ENCODE measurements at regions of chr6 and their contacts with region 1.

Region 1: GRCh38 chr6:41787219-41787917 is at the start of gene TOMM6:
- DNase-seq: peak; percentile 65
- H3K4me3 ChIP-seq: peak within 1 kb of the TSS; percentile 95
- H3K27me3 ChIP-seq: no peaks in the 10 kb centered on the region
- CTCF ChIP-seq: peak; percentile 88
- polyA plus RNA-seq, gene TOMM6: 157 and 199 TPM in 2 replicates

Region 2: DNA sequence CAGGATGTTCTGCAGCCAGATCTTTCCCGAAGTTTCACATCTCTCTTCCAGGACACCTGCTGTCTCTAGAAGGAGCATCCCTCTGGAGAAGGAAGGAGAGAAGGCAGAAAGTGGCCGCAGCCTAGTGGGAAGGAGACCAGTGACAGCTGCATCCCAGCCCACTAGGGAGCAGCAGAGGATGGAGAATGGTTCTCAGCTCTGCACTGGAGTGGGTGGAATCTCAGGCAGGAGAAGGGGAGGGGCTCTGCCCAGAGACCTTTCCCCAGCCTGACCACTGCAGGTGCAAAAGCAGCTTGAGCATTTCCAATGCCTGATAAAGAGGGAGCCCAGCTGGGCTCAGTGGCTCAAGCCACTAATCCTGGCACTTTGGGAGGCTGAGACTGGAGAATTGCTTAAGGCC is 419.7 kb before region 1 on chr6:
- CTCF ChIA-PET with region 1: interaction called, 17 read pairs
- POLR2A ChIA-PET with region 1: no interaction called
- DNase-seq: no peak
- H3K4me3 ChIP-seq: no peak overlapping the region
- H3K27me3 ChIP-seq: peaks cover 8% of the 10 kb centered on the region
- CTCF ChIP-seq: peak; percentile 82

Region 3: DNA sequence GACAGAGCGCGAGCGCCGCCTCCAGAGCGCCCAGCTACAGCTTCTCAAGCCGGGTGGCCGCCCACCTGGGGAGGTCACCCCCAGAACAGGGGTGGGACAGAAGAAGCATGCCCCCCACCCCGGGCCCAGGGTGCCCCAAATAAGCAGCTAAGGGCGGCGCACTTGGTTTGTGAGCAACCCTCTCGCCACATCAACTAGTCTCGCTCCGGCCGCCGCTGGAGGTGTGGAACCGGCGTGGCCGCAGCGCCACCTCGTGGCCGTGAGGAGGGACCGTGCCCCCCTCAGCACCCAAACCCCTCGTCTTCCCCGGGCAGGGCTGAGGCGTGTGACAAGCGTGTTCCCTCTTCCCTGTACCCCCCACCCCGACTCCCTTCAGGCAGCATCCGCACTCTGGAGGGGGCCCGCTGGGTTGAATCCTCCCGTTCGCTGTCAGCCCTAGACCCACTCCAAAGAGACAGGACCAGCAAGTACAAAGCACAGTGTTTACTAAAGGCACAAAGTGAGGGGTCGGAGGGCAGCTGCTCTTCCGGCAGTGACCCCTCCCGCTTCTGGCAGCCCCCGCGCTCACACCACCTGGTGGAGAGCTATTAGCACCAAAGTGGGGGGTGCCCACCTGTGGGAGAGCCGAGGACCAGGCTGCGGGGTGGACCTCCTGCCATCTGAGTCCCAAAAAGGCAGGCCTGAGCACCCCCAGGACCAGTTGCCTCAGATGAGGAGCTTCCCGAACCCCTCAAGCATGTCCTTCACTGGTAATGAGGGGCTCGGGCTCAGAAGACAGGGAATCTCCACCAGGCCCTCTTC is 103.7 kb before region 1 on chr6:
- CTCF ChIA-PET with region 1: interaction called, 19 read pairs
- POLR2A ChIA-PET with region 1: no interaction called
- DNase-seq: no peak
- H3K4me3 ChIP-seq: peak overlapping the region; percentile 2; the same call in 1 of the 2 replicates
- H3K27me3 ChIP-seq: no peaks in the 10 kb centered on the region
- CTCF ChIP-seq: peak; percentile 96

Region 4: GRCh38 chr6:41771054-41771983 is 16.0 kb before region 1 on chr6:
- CTCF ChIA-PET with region 1: interaction called, 36 read pairs
- POLR2A ChIA-PET with region 1: no interaction called
- DNase-seq: no peak
- H3K4me3 ChIP-seq: no peak overlapping the region
- H3K27me3 ChIP-seq: no peaks in the 10 kb centered on the region
- CTCF ChIP-seq: no peak

Region 5: GRCh38 chr6:41815587-41815986 is 28.2 kb after region 1 on chr6:
- CTCF ChIA-PET with region 1: interaction called, 12 read pairs
- POLR2A ChIA-PET with region 1: no interaction called
- DNase-seq: no peak
- H3K4me3 ChIP-seq: no peak overlapping the region
- H3K27me3 ChIP-seq: no peaks in the 10 kb centered on the region
- CTCF ChIP-seq: no peak

Region 6: GRCh38 chr6:41929924-41930323 is 142.6 kb after region 1 on chr6:
- CTCF ChIA-PET with region 1: interaction called, 21 read pairs
- POLR2A ChIA-PET with region 1: no interaction called
- DNase-seq: no peak
- H3K4me3 ChIP-seq: no peak overlapping the region
- H3K27me3 ChIP-seq: no peaks in the 10 kb centered on the region
- CTCF ChIP-seq: no peak

Region 7: DNA sequence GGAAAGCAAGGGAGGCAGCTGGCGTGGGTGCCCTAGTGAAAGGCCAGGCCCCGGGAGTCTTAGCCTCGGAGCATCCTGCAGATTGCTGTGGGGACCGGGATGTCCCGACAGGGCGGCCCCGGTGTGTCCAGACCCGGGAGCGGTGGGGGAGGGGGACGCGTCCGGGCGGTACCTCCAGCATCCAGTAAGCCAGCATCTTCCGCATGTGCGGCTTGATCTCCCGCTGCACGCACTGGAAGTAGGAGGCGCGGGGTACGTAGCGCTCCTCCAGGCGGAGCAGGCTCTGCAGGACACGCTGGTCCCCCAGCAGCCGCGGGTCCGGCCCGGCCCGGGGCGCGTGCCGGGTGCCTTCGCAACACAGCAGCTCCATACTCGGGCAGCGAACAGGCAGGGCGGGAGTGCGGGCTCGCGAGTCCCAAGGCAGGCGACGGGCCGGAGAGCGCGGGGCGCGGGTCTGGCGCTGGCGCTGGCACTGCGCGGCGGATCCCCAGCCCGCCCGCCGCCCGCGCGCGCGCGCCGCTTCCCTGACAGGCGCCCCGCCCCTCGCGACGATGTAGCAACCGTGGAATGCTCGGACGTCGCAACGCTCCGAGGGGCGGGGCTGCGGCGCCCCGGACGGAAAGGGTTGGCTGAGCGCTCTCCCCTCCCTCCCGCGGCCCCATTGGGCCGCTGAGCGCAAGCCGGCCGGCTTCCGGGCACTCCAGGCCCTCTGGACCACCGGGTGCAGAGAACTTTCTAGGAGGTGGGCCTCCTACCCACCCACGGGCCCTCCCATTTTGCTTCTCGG is 154.1 kb after region 1 on chr6 and contains the start of gene CCND3:
- CTCF ChIA-PET with region 1: interaction called, 21 read pairs
- POLR2A ChIA-PET with region 1: no interaction called
- DNase-seq: peak; percentile 55
- H3K4me3 ChIP-seq: peak within 1 kb of the TSS; percentile 81
- H3K27me3 ChIP-seq: no peaks in the 10 kb centered on the region
- CTCF ChIP-seq: no peak
- polyA plus RNA-seq, gene CCND3: 20.0 and 38.5 TPM in 2 replicates

Measured in BJ (cell line).